Activated CD4-positive, alpha-beta memory T cell treated with anti-CD3 and anti-CD28 coated beads for 36 hours (primary cell): ENCODE measurements at regions of chr17 and their contacts with region 1.

Region 1: DNA sequence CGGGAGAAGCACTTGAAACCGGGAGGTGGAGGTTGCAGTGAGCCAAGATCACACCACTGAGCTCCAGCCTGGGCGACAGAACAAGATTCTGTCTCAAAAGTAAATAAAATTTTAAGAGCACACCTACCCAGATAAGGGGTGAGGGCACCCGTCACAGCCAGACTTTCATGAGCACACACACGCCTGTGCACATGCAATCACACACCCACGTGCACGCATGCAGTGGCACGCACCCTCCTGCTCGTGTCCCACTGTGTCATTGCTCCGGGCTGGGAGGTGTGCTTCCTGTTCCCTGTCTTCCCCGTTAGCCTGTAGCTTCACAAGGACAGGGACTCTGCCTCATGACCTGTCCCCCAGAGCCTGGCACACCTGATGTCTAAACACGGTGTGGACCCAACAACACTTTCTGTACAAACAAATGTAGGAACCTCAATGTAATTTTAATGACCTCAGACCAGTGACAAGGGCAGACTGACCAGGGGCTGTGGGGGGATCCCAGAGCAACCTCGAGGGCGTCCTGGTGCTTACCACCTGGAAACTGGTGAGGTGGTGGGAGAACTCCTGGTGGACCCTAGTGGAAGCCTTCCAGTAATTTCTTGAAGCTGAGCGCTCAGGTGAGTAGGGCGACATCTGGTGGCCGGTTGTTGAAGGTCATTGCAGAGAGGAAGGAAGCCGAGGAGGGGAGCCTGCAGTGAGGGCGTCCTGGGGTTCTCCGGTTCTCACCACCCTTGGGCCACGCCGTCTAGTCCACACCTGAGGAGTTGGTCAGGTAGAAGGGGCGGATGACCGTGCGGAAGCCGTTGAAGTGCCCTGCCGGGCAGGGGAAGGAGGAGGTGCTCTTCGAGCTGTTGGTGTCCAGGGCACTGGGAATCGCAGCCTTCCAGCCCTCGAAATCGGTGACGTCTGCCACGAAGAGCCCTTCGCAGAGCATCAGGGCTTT is 8.6 kb downstream of the LGALS3BP start:
- DNase-seq: peak; percentile 85
- H3K4me3 Mint-ChIP-seq: no peak overlapping the region
- H3K27ac Mint-ChIP-seq: peak overlapping the region; percentile 53
- H3K4me1 Mint-ChIP-seq: peaks cover 6% of the 10 kb centered on the region
- H3K27me3 Mint-ChIP-seq: no peaks in the 10 kb centered on the region

Region 2: DNA sequence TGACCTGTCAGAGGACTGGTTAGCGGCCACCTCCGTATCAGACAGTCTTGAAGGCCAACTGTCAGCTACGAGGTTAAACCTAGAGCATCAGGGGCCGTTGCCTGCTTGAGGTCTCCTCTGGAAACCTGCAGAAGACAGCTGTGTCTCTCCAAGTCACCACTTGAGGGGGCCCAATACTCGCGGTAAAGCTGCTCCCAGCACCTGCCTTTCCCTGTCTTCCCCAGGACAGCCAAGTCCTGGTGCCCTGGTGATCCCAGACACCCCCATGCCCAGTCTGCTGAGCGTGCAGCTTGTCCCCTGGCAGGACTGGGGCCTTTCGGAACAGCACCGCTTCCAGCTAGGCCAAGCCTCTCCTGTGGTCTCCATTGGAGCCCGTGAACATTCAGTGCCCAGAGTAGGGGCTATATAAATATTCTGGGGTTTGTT is 474.0 kb before region 1 on chr17:
- CTCF ChIA-PET with region 1: interaction called, 12 read pairs
- POLR2A ChIA-PET with region 1: no interaction called
- intact Hi-C with region 1: no loop called
- DNase-seq: peak; percentile 72
- H3K4me3 Mint-ChIP-seq: no peak overlapping the region
- H3K27ac Mint-ChIP-seq: no peak overlapping the region
- H3K4me1 Mint-ChIP-seq: no peaks in the 10 kb centered on the region
- H3K27me3 Mint-ChIP-seq: no peaks in the 10 kb centered on the region

Region 3: GRCh38 chr17:78840725-78841611 is 130.1 kb before region 1 on chr17 and contains the start of gene USP36:
- CTCF ChIA-PET with region 1: interaction called, 11 read pairs
- POLR2A ChIA-PET with region 1: no interaction called
- intact Hi-C with region 1: no loop called
- DNase-seq: peak; percentile 100
- H3K4me3 Mint-ChIP-seq: peak within 1 kb of the TSS; percentile 84
- H3K27ac Mint-ChIP-seq: peak within 1 kb of the TSS; percentile 89
- H3K4me1 Mint-ChIP-seq: peaks cover 46% of the 10 kb centered on the region
- H3K27me3 Mint-ChIP-seq: no peaks in the 10 kb centered on the region
- total RNA-seq, gene USP36: 71.2 to 74.3 TPM

Region 4: DNA sequence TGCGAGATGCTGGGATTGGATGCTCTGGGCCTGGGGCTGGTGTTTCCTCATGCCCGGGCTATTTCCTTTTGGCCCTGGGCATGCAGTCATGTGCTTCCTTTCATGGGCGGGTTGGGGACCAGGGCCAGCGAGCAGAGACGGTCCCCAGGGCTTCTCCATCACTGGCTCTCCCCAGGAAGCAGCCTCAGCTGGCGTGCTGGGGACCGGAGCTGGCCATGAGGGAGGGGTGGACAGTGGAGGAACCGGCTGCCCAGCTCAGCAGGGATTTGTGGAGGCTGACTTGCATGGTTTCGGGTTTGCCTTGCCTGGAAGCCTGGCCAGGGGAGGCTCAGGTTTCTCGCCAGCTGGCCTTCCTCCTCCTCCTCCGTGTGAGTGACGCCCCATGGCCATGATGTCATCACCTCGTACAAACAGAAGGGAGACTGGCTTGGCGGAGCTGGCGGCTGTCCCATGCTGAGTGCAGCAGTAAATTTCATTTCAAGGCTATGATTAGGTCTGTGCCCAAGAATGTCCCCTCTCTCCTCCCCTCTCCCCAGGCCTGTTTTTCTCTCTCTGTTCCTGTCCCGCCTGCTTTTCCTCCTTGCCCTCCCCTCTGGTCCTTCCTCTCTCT is 37.0 kb before region 1 on chr17:
- CTCF ChIA-PET with region 1: interaction called, 3 read pairs
- POLR2A ChIA-PET with region 1: no interaction called
- intact Hi-C with region 1: loop called (anchors 2 kb)
- DNase-seq: no peak
- H3K4me3 Mint-ChIP-seq: no peak overlapping the region
- H3K27ac Mint-ChIP-seq: peak overlapping the region; percentile 8
- H3K4me1 Mint-ChIP-seq: peaks cover 17% of the 10 kb centered on the region
- H3K27me3 Mint-ChIP-seq: no peaks in the 10 kb centered on the region

Region 5: GRCh38 chr17:78940708-78941107 is 30.4 kb before region 1 on chr17:
- CTCF ChIA-PET with region 1: interaction called, 11 read pairs
- POLR2A ChIA-PET with region 1: no interaction called
- intact Hi-C with region 1: no loop called
- DNase-seq: no peak
- H3K4me3 Mint-ChIP-seq: no peak overlapping the region
- H3K27ac Mint-ChIP-seq: no peak overlapping the region
- H3K4me1 Mint-ChIP-seq: no peaks in the 10 kb centered on the region
- H3K27me3 Mint-ChIP-seq: peaks cover 2% of the 10 kb centered on the region

Region 6: GRCh38 chr17:78986048-78986648 is 15.0 kb after region 1 on chr17:
- CTCF ChIA-PET with region 1: interaction called, 22 read pairs
- POLR2A ChIA-PET with region 1: no interaction called
- intact Hi-C with region 1: no loop called
- DNase-seq: no peak
- H3K4me3 Mint-ChIP-seq: no peak overlapping the region
- H3K27ac Mint-ChIP-seq: no peak overlapping the region
- H3K4me1 Mint-ChIP-seq: peaks cover 15% of the 10 kb centered on the region
- H3K27me3 Mint-ChIP-seq: no peaks in the 10 kb centered on the region

Region 7: GRCh38 chr17:78995761-78996740 is 24.9 kb after region 1 on chr17:
- CTCF ChIA-PET with region 1: interaction called, 10 read pairs
- POLR2A ChIA-PET with region 1: no interaction called
- intact Hi-C with region 1: no loop called
- DNase-seq: no peak
- H3K4me3 Mint-ChIP-seq: no peak overlapping the region
- H3K27ac Mint-ChIP-seq: no peak overlapping the region
- H3K4me1 Mint-ChIP-seq: peaks cover 7% of the 10 kb centered on the region
- H3K27me3 Mint-ChIP-seq: no peaks in the 10 kb centered on the region